Caki2 (cell line): ENCODE measurements at regions of chr5 and their contacts with region 1.

Region 1: GRCh38 chr5:91098541-91098940 is 284.6 kb downstream of the ARRDC3 start:
- DNase-seq: no peak

Region 2: GRCh38 chr5:90911169-90911568 is 187.4 kb before region 1 on chr5:
- in situ Hi-C with region 1: loop called (anchors 10 kb)
- DNase-seq: no peak

Region 3: DNA sequence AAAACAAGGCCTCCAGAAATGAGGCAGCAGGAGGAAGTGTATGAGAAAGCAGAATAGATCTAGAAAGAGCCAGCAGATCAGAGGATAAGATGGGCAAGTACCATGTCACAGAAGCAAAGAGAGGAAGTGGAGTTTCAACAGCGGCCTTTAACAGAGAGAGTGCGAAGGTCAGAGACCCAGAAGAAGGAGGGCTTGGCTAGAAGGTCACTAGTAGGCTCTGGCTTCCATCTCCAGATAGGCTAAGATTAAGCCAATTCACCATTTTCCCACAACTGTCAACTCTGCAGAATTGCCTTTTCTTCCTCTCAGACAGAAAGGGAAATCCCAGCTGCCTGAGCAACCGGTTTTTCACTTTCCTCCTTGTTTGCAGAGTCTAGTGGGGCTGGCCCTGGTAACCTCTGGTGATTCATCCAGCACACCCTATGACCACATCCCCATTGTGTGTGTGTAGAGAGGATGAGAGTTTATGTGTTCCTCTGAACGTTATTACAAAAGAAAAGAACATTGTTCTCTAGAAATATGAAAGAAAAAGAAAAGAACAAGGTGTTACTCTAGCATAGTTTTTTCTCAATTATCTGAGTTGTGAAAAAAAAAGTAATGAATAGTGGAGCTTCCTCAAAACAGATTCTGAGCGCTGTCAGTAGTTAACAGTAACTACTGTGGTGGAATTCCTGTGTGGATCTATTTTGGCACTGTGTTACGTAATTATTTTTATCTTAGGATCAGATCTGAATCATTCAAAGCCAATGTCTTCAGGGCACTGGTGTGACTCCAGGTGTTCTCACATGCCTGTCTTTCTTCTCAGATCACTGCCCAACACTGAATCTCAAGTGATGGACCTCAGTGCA is 64.2 kb after region 1 on chr5:
- in situ Hi-C with region 1: no loop called
- DNase-seq: peak; percentile 88

Region 4: GRCh38 chr5:91938441-91938840 is 839.9 kb after region 1 on chr5:
- in situ Hi-C with region 1: no loop called
- DNase-seq: no peak